ENCODE measurements at regions of chr5 and their contacts with region 1.

Region 1: GRCh38 chr5:149561848-149562247 is 10.6 kb upstream of the CSNK1A1 start:
- DNase-seq: no peak
- ATAC-seq: peak; percentile 74 to 76
- H3K4me3 ChIP-seq: no peak overlapping the region
- H3K27ac ChIP-seq: peak overlapping the region; percentile 78
- H3K4me1 ChIP-seq: peaks cover 28% of the 10 kb centered on the region
- H3K27me3 ChIP-seq: no peaks in the 10 kb centered on the region
- CTCF ChIP-seq: no peak

Region 2: DNA sequence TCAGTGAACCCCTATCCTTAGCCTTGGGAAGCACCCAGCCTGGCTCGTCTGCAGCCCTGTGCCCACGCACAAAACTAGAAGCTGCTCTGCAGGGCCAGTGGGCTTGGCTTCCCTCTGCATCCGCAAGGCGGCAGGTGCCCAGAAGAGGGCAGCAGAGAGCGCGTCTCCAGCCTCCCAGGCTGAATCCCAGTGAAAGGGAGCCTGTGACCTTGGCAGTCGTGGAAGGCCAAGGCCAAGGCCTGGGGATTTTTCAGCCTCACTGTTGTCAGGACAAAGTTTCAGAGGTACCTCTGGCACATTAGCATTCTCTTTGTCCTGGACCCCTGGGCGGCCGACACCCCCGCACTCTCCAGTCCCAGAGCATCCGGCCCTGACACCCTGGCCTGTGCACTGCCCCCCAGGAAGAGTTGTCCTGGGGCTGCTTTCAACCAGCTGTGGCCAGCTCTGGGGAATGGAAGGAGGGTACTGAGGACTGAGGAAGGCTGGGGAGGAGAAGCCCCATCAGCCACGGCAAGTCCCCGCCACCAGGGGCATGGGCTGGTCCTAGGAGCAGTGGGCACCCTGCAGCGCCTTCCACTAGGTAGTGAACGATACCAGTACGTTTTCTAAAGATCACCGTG is 119.2 kb before region 1 on chr5:
- intact Hi-C with region 1: loop called (anchors 5 kb)
- DNase-seq: peak; percentile 86
- ATAC-seq: peak; percentile 90 to 92
- H3K4me3 ChIP-seq: no peak overlapping the region
- H3K27ac ChIP-seq: peak overlapping the region; percentile 37
- H3K4me1 ChIP-seq: peaks cover 29% of the 10 kb centered on the region
- H3K27me3 ChIP-seq: no peaks in the 10 kb centered on the region
- CTCF ChIP-seq: peak; percentile 95

Region 3: DNA sequence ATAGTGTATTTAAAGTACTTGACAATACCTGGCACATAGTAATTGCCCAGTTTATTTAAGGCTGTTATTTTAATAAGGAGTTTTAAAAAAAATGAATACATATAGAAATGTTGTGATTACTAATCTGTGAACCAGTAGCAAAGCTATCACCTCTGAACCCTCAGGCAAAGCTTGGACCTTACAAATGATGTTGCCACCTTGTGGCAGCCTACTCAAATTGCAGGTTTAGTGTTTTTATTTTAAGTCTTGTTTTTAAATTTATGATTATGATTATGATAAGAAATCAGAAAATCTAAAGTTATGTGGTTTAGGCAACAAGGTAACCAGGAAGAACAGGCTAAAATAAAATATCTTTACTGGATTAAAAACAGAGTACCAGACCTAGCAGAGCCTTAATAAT is 204.1 kb after region 1 on chr5:
- intact Hi-C with region 1: no loop called
- DNase-seq: no peak
- ATAC-seq: no peak
- H3K4me3 ChIP-seq: no peak overlapping the region
- H3K27ac ChIP-seq: no peak overlapping the region
- H3K4me1 ChIP-seq: no peaks in the 10 kb centered on the region
- H3K27me3 ChIP-seq: no peaks in the 10 kb centered on the region
- CTCF ChIP-seq: peak; percentile 21

Region 4: GRCh38 chr5:150653145-150653772 is 1091.4 kb after region 1 on chr5:
- intact Hi-C with region 1: no loop called
- DNase-seq: no peak
- ATAC-seq: no peak
- H3K4me3 ChIP-seq: no peak overlapping the region
- H3K27ac ChIP-seq: peak overlapping the region; percentile 37
- H3K4me1 ChIP-seq: peaks cover 43% of the 10 kb centered on the region
- H3K27me3 ChIP-seq: no peaks in the 10 kb centered on the region
- CTCF ChIP-seq: no peak

Measured in lower lobe of right lung (tissue), 2 donors.